ENCODE measurements at regions of chr11 and their contacts with region 1.

Region 1: GRCh38 chr11:73787643-73788537 is at the start of gene MRPL48:
- DNase-seq: peak; percentile 91

Region 2: GRCh38 chr11:73671701-73672100 is 116.2 kb before region 1 on chr11:
- CTCF ChIA-PET with region 1: no interaction called
- POLR2A ChIA-PET with region 1: no interaction called
- DNase-seq: no peak

Region 3: GRCh38 chr11:73800276-73800806 is 12.5 kb after region 1 on chr11:
- CTCF ChIA-PET with region 1: no interaction called
- POLR2A ChIA-PET with region 1: interaction called, 13 read pairs
- DNase-seq: no peak